ENCODE measurements at regions of chr17 and their contacts with region 1.

Region 1: GRCh38 chr17:54992797-54993639 is 24.5 kb downstream of the STXBP4 start:
- DNase-seq: peak in 1 of 2 donors; percentile 77
- ATAC-seq: peak; percentile 66 to 73 (median 67)
- H3K4me3 ChIP-seq: no peak overlapping the region
- H3K4me3 Mint-ChIP-seq: no peak overlapping the region
- H3K27ac ChIP-seq: no peak overlapping the region
- H3K27ac Mint-ChIP-seq: no peak overlapping the region
- H3K4me1 ChIP-seq: no peaks in the 10 kb centered on the region
- H3K4me1 Mint-ChIP-seq: no peaks in the 10 kb centered on the region
- H3K27me3 ChIP-seq: no peaks in the 10 kb centered on the region
- H3K27me3 Mint-ChIP-seq: no peaks in the 10 kb centered on the region
- CTCF ChIP-seq: peak; percentile 84

Region 2: GRCh38 chr17:55023626-55024025 is 30.6 kb after region 1 on chr17:
- intact Hi-C with region 1: no loop called
- DNase-seq: no peak
- ATAC-seq: no peak
- H3K4me3 ChIP-seq: no peak overlapping the region
- H3K4me3 Mint-ChIP-seq: no peak overlapping the region
- H3K27ac ChIP-seq: no peak overlapping the region
- H3K27ac Mint-ChIP-seq: no peak overlapping the region
- H3K4me1 ChIP-seq: no peaks in the 10 kb centered on the region
- H3K4me1 Mint-ChIP-seq: no peaks in the 10 kb centered on the region
- H3K27me3 ChIP-seq: no peaks in the 10 kb centered on the region
- H3K27me3 Mint-ChIP-seq: no peaks in the 10 kb centered on the region
- CTCF ChIP-seq: no peak

Region 3: DNA sequence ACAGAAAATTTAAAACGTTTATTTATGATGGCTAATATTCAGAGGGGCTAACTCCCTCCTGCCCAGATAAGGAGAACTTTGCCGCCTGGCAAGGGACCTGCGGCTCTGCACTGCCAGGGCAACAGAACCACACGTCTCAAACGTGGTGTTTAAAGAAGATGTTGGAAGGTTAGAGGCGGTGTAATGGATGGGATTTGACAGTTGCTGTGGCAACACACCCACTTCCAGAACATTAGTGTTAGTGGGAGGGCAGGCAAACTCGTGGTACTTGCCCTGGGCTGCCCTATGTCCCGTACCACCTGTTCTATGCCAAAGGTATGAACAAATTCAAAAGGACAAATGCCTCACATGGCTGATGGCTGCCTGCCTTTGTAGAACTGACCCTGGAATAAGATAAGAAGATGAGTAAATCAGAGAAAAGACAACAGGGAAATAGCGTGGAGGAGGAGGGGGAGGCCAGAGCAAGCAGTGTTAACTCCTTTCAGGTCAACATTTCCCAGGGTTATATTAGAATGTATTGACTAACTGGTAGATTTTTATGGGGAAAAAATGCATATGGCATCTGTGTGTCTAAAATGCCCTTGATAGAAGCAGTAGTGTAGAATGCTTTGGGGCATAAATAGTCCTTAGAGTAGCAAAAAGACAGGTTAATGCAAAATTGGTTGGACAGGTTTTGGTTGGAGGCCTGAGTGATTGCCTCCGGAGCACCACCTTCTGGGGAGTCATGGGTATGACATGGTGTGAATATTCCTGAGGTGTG is 302.6 kb after region 1 on chr17:
- intact Hi-C with region 1: loop called (anchors 1 kb)
- DNase-seq: peak; percentile 33 to 77
- ATAC-seq: peak; percentile 69 to 94 (median 86)
- H3K4me3 ChIP-seq: no peak overlapping the region
- H3K4me3 Mint-ChIP-seq: no peak overlapping the region
- H3K27ac ChIP-seq: no peak overlapping the region
- H3K27ac Mint-ChIP-seq: no peak overlapping the region
- H3K4me1 ChIP-seq: no peaks in the 10 kb centered on the region
- H3K4me1 Mint-ChIP-seq: no peaks in the 10 kb centered on the region
- H3K27me3 ChIP-seq: no peaks in the 10 kb centered on the region
- H3K27me3 Mint-ChIP-seq: peaks cover 3 to 7% of the 10 kb centered on the region in 2 donors
- CTCF ChIP-seq: peak; percentile 87

Region 4: GRCh38 chr17:55348749-55349354 is 355.8 kb after region 1 on chr17:
- intact Hi-C with region 1: loop called (anchors 2 kb)
- DNase-seq: peak; percentile 20 to 71
- ATAC-seq: peak; percentile 59 to 75 (median 61)
- H3K4me3 ChIP-seq: no peak overlapping the region
- H3K4me3 Mint-ChIP-seq: no peak overlapping the region
- H3K27ac ChIP-seq: no peak overlapping the region
- H3K27ac Mint-ChIP-seq: no peak overlapping the region
- H3K4me1 ChIP-seq: no peaks in the 10 kb centered on the region
- H3K4me1 Mint-ChIP-seq: peaks cover 5 to 6% of the 10 kb centered on the region in 2 donors
- H3K27me3 ChIP-seq: no peaks in the 10 kb centered on the region
- H3K27me3 Mint-ChIP-seq: no peaks in the 10 kb centered on the region
- CTCF ChIP-seq: peak; percentile 78

Region 5: GRCh38 chr17:55356434-55357328 is 363.7 kb after region 1 on chr17:
- intact Hi-C with region 1: loop called (anchors 1 kb)
- DNase-seq: peak; percentile 30 to 78
- ATAC-seq: peak; percentile 81 to 90 (median 81)
- H3K4me3 ChIP-seq: no peak overlapping the region
- H3K4me3 Mint-ChIP-seq: no peak overlapping the region
- H3K27ac ChIP-seq: no peak overlapping the region
- H3K27ac Mint-ChIP-seq: no peak overlapping the region
- H3K4me1 ChIP-seq: no peaks in the 10 kb centered on the region
- H3K4me1 Mint-ChIP-seq: peaks cover 5 to 6% of the 10 kb centered on the region in 2 donors
- H3K27me3 ChIP-seq: peaks cover 5% of the 10 kb centered on the region
- H3K27me3 Mint-ChIP-seq: peaks cover 14 to 22% of the 10 kb centered on the region in 2 donors
- CTCF ChIP-seq: peak; percentile 84

Region 6: DNA sequence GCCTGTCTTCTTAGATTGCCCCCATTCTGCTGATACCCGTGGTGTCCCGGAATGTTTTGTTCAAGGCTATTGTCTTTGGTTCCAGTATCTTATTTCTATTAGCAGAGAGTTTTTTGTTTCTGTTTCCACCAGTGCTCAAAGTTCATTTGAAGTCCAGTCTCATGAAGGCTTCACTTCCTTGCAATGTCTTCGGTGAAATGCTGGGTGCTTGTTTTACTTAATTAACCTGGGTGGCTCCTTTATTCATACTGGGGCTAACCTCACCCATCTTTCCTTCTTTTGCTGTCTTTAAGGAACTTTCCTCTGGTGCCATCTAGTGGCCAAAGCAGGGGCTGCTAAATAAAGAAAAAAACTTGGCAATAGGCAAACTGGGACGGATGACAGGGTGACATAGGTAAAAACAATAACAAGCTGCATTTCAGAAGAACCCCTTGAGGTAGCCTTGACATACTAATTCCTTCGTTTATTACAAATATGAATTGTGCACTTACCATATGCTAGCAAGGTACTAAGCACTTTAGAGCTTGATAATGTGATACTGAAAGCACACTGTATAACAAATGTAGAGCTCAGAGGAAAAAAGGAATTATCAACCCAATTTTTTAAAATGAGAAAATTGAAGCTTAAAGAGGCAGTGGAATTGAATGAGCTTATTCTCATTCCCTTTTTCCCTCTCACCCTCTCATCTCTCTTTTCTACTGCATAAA is 521.0 kb after region 1 on chr17:
- intact Hi-C with region 1: loop called (anchors 1 kb)
- DNase-seq: peak; percentile 39 to 82
- ATAC-seq: peak; percentile 59 to 76 (median 73)
- H3K4me3 ChIP-seq: no peak overlapping the region
- H3K4me3 Mint-ChIP-seq: no peak overlapping the region
- H3K27ac ChIP-seq: no peak overlapping the region
- H3K27ac Mint-ChIP-seq: no peak overlapping the region
- H3K4me1 ChIP-seq: no peaks in the 10 kb centered on the region
- H3K4me1 Mint-ChIP-seq: no peaks in the 10 kb centered on the region
- H3K27me3 ChIP-seq: no peaks in the 10 kb centered on the region
- H3K27me3 Mint-ChIP-seq: peaks cover 0 to 6% of the 10 kb centered on the region in 2 donors
- CTCF ChIP-seq: peak; percentile 76

Measured in natural killer cell (primary cell).